B cell (primary cell): ENCODE measurements at regions of chr18 and their contacts with region 1.

Region 1: GRCh38 chr18:50356036-50356945 is 18.6 kb upstream of the SKA1 start:
- DNase-seq: peak; percentile 63
- ATAC-seq: peak; percentile 55
- H3K4me3 ChIP-seq: no peak overlapping the region
- H3K4me3 Mint-ChIP-seq: peak overlapping the region; percentile 11
- H3K27ac ChIP-seq: peak overlapping the region in 1 of 2 donors; percentile 21
- H3K27ac Mint-ChIP-seq: peak overlapping the region; percentile 33
- H3K4me1 ChIP-seq: peaks cover 13 to 14% of the 10 kb centered on the region in 2 donors
- H3K4me1 Mint-ChIP-seq: peaks cover 14% of the 10 kb centered on the region
- H3K27me3 ChIP-seq: peaks cover 0 to 4% (median under 1%) of the 10 kb centered on the region in 4 experiments
- H3K27me3 Mint-ChIP-seq: peaks cover 28% of the 10 kb centered on the region
- CTCF ChIP-seq: no peak

Region 2: GRCh38 chr18:49510393-49511115 is 845.7 kb before region 1 on chr18:
- CTCF ChIA-PET with region 1: interaction called, 23 read pairs
- POLR2A ChIA-PET with region 1: no interaction called
- intact Hi-C with region 1: no loop called
- DNase-seq: peak; percentile 70
- ATAC-seq: peak; percentile 39
- H3K4me3 ChIP-seq: no peak overlapping the region
- H3K4me3 Mint-ChIP-seq: no peak overlapping the region
- H3K27ac ChIP-seq: no peak overlapping the region
- H3K27ac Mint-ChIP-seq: no peak overlapping the region
- H3K4me1 ChIP-seq: no peaks in the 10 kb centered on the region
- H3K4me1 Mint-ChIP-seq: no peaks in the 10 kb centered on the region
- H3K27me3 ChIP-seq: peaks cover 0 to 3% (median 0%) of the 10 kb centered on the region in 4 experiments
- H3K27me3 Mint-ChIP-seq: peaks cover 22% of the 10 kb centered on the region
- CTCF ChIP-seq: peak; percentile 82

Region 3: GRCh38 chr18:50194631-50195532 is 161.4 kb before region 1 on chr18 and contains the start of gene MYO5B:
- CTCF ChIA-PET with region 1: interaction called, 5 read pairs
- POLR2A ChIA-PET with region 1: no interaction called
- intact Hi-C with region 1: loop called (anchors 2 kb)
- DNase-seq: peak; percentile 83
- ATAC-seq: peak; percentile 87
- H3K4me3 ChIP-seq: peak within 1 kb of the TSS in 4 of 5 experiments; percentile 32 to 60 (median 50)
- H3K4me3 Mint-ChIP-seq: peak within 1 kb of the TSS; percentile 68
- H3K27ac ChIP-seq: no peak within 1 kb of the TSS
- H3K27ac Mint-ChIP-seq: no peak within 1 kb of the TSS
- H3K4me1 ChIP-seq: peaks cover 24 to 30% of the 10 kb centered on the region in 2 donors
- H3K4me1 Mint-ChIP-seq: peaks cover 16% of the 10 kb centered on the region
- H3K27me3 ChIP-seq: peaks cover 0 to 43% (median 29%) of the 10 kb centered on the region in 4 experiments
- H3K27me3 Mint-ChIP-seq: peaks cover 61% of the 10 kb centered on the region
- CTCF ChIP-seq: peak; percentile 22
- total RNA-seq, gene MYO5B: 0.24 and 0.30 TPM in 2 replicates

Region 4: DNA sequence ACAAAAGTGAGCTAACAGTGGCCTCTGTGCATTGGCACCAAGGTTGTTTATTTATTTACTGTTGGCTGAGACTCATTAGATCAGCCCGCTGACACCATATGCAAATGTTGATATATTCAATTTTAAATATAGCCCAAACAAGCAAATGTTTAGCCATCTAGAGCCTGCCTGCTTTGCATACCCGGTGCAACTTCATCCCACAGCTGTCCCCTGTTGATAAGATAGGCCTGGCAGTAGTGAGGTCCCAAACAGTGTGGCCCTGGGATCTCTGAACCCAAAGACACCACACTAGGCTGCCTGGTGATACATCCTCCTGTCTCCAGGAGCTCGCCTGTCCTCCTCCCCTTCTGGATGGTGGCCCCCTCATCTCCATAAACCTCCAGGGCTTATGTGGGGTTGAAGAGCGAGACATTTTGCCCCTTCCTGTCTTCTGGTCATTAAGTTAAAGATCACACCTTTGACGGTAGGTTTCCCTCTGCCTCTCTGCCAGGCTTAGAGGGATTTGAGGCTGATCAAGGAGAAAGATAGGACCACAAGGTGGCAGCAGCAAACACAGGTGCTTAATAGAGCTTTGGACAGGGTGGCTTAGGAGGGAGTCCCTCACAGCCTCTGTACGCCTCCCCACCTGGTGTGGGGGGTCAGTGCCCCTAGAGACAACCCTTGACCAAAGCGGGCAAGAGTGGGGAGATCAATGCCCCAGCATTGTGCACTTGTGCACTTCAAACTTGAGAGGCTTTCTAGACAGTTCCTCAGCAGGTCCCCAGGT is 137.7 kb before region 1 on chr18:
- CTCF ChIA-PET with region 1: interaction called, 187 read pairs
- POLR2A ChIA-PET with region 1: no interaction called
- intact Hi-C with region 1: no loop called
- DNase-seq: peak; percentile 74
- ATAC-seq: peak; percentile 56
- H3K4me3 ChIP-seq: no peak overlapping the region
- H3K4me3 Mint-ChIP-seq: no peak overlapping the region
- H3K27ac ChIP-seq: no peak overlapping the region
- H3K27ac Mint-ChIP-seq: no peak overlapping the region
- H3K4me1 ChIP-seq: peaks cover 4 to 10% of the 10 kb centered on the region in 2 donors
- H3K4me1 Mint-ChIP-seq: peaks cover 5% of the 10 kb centered on the region
- H3K27me3 ChIP-seq: peaks cover 0 to 24% (median 2%) of the 10 kb centered on the region in 4 experiments
- H3K27me3 Mint-ChIP-seq: peaks cover 40% of the 10 kb centered on the region
- CTCF ChIP-seq: peak; percentile 62

Region 5: DNA sequence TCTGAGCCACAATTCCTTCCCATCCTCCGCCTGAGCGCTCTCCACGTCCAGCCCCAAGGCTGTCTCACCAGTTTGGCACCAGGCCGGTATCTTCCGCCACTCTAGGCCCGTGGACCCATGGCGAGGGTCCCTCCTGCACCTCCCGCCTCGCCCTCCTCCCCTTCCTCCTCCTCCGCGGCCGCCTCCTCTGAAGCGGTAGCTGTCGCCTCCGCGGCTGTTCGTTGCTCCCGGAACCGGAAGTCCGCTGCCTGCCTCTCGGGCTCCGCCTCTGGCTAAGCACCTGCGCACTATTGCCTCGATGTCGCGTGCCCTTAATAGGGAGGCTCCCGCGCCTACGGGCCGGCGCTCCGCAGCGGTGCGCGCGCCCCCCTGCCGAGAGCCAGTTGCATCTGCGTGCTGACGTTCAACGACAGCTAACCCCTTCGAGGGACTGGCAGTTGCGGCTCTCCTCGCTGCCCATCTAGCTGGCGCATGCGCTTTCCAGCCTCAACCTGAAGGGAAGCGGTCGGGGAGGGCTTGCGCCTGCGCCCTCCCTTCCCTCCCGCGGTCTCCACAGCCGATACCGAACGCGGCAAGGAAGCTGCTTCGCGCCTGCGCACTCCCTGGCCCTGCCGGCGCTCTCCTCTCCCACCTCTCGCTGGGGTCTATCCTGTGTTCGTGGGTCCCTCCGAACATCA is 74.9 kb before region 1 on chr18 and contains the start of gene MBD1:
- CTCF ChIA-PET with region 1: interaction called, 27 read pairs
- POLR2A ChIA-PET with region 1: interaction called, 6 read pairs
- intact Hi-C with region 1: loop called (anchors 1 kb)
- DNase-seq: peak; percentile 100
- ATAC-seq: peak; percentile 92
- H3K4me3 ChIP-seq: peak within 1 kb of the TSS; percentile 92 to 99 (median 99)
- H3K4me3 Mint-ChIP-seq: peak within 1 kb of the TSS; percentile 97
- H3K27ac ChIP-seq: peak within 1 kb of the TSS; percentile 81 to 87
- H3K27ac Mint-ChIP-seq: peak within 1 kb of the TSS; percentile 97
- H3K4me1 ChIP-seq: peaks cover 30 to 34% of the 10 kb centered on the region in 2 donors
- H3K4me1 Mint-ChIP-seq: peaks cover 39% of the 10 kb centered on the region
- H3K27me3 ChIP-seq: no peaks in the 10 kb centered on the region
- H3K27me3 Mint-ChIP-seq: no peaks in the 10 kb centered on the region
- CTCF ChIP-seq: no peak
- total RNA-seq, gene MBD1: 120 and 132 TPM in 2 replicates

Region 6: GRCh38 chr18:50297621-50298442 is 58.5 kb before region 1 on chr18:
- CTCF ChIA-PET with region 1: interaction called, 12 read pairs
- POLR2A ChIA-PET with region 1: no interaction called
- intact Hi-C with region 1: loop called (anchors 2 kb)
- DNase-seq: peak; percentile 92
- ATAC-seq: peak; percentile 98
- H3K4me3 ChIP-seq: peak overlapping the region; percentile 31 to 50 (median 47)
- H3K4me3 Mint-ChIP-seq: peak overlapping the region; percentile 88
- H3K27ac ChIP-seq: no peak overlapping the region
- H3K27ac Mint-ChIP-seq: peak overlapping the region; percentile 77
- H3K4me1 ChIP-seq: peaks cover 13 to 14% of the 10 kb centered on the region in 2 donors
- H3K4me1 Mint-ChIP-seq: peaks cover 13% of the 10 kb centered on the region
- H3K27me3 ChIP-seq: peaks cover 0 to 5% (median 2%) of the 10 kb centered on the region in 4 experiments
- H3K27me3 Mint-ChIP-seq: peaks cover 7% of the 10 kb centered on the region
- CTCF ChIP-seq: no peak

Region 7: DNA sequence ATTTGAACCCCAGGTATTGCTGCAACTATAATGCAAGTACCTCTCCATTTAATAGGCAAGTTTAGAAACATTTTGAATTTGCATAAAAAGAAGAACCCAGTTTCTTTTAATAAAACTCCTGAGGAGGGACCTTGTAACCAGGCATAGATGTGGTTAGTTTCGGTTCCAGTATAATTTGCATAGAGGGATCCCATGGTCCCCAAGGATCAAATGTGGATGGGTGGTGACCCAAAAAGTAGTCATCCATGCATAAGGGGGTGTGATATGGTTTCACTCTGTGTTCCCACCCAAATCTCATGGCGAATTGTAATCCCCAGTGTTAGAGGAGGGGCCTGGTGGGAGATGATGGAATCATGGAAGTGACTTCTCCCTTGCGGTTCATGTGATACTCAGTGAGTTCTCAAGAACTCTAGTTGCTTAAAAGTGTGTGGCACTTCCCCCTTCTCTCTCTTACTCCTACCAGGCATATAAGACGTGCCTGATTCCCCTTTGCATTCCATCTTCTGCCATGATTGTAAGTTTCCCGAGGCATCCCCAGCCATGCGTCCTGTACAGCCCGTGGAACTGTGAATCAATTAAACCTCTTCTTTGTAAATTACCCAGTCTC is 21.6 kb before region 1 on chr18:
- CTCF ChIA-PET with region 1: interaction called, 15 read pairs
- POLR2A ChIA-PET with region 1: no interaction called
- intact Hi-C with region 1: loop called (anchors 1 kb)
- DNase-seq: peak; percentile 82
- ATAC-seq: peak; percentile 98
- H3K4me3 ChIP-seq: peak overlapping the region in 3 of 5 experiments; percentile 19 to 57 (median 30)
- H3K4me3 Mint-ChIP-seq: peak overlapping the region; percentile 62
- H3K27ac ChIP-seq: no peak overlapping the region
- H3K27ac Mint-ChIP-seq: peak overlapping the region; percentile 71
- H3K4me1 ChIP-seq: peaks cover 67 to 72% of the 10 kb centered on the region in 2 donors
- H3K4me1 Mint-ChIP-seq: peaks cover 75% of the 10 kb centered on the region
- H3K27me3 ChIP-seq: peaks cover 0 to 5% (median 0%) of the 10 kb centered on the region in 4 experiments
- H3K27me3 Mint-ChIP-seq: peaks cover 3% of the 10 kb centered on the region
- CTCF ChIP-seq: no peak

Region 8: DNA sequence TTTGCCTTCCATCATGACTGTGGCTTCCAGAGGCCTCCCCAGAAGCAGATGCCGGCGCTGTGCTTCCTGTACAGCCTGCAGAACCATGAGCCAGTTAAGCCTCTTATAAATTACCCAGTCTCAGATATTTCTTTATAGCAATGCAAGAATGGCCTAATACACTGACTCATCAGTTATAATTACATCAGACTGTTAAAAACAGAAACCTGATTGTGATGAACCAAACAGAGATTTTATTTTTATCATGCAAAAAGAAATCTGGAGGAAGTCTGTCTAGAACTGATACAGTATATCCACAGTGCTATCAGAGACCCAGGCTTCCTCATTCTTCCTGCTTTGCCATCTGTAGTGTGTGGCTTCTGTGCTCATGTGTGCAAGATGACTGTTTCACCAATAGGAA is 934.6 kb after region 1 on chr18:
- CTCF ChIA-PET with region 1: no interaction called
- POLR2A ChIA-PET with region 1: no interaction called
- intact Hi-C with region 1: no loop called
- DNase-seq: no peak
- ATAC-seq: no peak
- H3K4me3 ChIP-seq: no peak overlapping the region
- H3K4me3 Mint-ChIP-seq: no peak overlapping the region
- H3K27ac ChIP-seq: no peak overlapping the region
- H3K27ac Mint-ChIP-seq: no peak overlapping the region
- H3K4me1 ChIP-seq: no peaks in the 10 kb centered on the region
- H3K4me1 Mint-ChIP-seq: no peaks in the 10 kb centered on the region
- H3K27me3 ChIP-seq: peaks cover 0 to 5% (median 1%) of the 10 kb centered on the region in 4 experiments
- H3K27me3 Mint-ChIP-seq: peaks cover 20% of the 10 kb centered on the region
- CTCF ChIP-seq: no peak